Activated CD8-positive, alpha-beta T cell treated with anti-CD3 and anti-CD28 coated beads for 36 hours (primary cell): ENCODE measurements at regions of chr17 and their contacts with region 1.

Region 1: DNA sequence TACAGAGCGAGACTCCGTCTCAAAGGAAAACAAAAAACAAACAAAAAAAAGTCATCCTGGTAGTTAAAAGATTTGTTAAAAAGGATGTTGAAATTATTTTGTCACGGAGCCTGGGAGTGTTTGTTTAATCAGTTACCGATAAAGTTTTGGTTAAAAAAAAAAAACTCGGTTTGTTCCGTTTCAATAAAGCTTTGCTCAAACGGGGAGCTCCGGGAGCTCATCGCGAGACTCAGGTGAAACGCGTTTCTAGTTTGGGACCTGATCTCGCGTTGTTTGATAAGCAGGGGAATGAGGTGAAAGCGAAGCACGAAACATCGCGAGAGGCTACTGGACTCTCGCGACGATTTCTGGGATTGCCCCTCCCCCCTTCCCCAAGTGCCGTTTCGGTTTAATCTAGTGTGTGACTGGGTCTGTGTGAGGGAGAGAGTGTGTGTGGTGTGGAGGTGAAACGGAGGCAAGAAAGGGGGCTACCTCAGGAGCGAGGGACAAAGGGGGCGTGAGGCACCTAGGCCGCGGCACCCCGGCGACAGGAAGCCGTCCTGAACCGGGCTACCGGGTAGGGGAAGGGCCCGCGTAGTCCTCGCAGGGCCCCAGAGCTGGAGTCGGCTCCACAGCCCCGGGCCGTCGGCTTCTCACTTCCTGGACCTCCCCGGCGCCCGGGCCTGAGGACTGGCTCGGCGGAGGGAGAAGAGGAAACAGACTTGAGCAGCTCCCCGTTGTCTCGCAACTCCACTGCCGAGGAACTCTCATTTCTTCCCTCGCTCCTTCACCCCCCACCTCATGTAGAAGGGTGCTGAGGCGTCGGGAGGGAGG is at the start of gene CDK12:
- DNase-seq: peak; percentile 97
- ATAC-seq: peak; percentile 94
- H3K4me3 Mint-ChIP-seq: peak within 1 kb of the TSS; percentile 84
- H3K27ac Mint-ChIP-seq: peak within 1 kb of the TSS; percentile 93
- H3K4me1 Mint-ChIP-seq: peaks cover 21% of the 10 kb centered on the region
- H3K27me3 Mint-ChIP-seq: no peaks in the 10 kb centered on the region
- CTCF ChIP-seq: no peak
- total RNA-seq, gene CDK12: 61.4 to 61.9 TPM

Region 2: GRCh38 chr17:39401412-39402243 is 59.7 kb before region 1 on chr17 and contains the start of gene FBXL20:
- CTCF ChIA-PET with region 1: no interaction called
- POLR2A ChIA-PET with region 1: interaction called, 25 read pairs
- intact Hi-C with region 1: no loop called
- DNase-seq: peak; percentile 94
- ATAC-seq: peak; percentile 71
- H3K4me3 Mint-ChIP-seq: peak within 1 kb of the TSS; percentile 99
- H3K27ac Mint-ChIP-seq: peak within 1 kb of the TSS; percentile 98
- H3K4me1 Mint-ChIP-seq: peaks cover 57% of the 10 kb centered on the region
- H3K27me3 Mint-ChIP-seq: no peaks in the 10 kb centered on the region
- CTCF ChIP-seq: no peak
- total RNA-seq, gene FBXL20: 17.7 to 19.1 TPM

Region 3: GRCh38 chr17:39429600-39429999 is 31.7 kb before region 1 on chr17:
- CTCF ChIA-PET with region 1: no interaction called
- POLR2A ChIA-PET with region 1: interaction called, 11 read pairs
- intact Hi-C with region 1: no loop called
- DNase-seq: no peak
- ATAC-seq: no peak
- H3K4me3 Mint-ChIP-seq: no peak overlapping the region
- H3K27ac Mint-ChIP-seq: no peak overlapping the region
- H3K4me1 Mint-ChIP-seq: no peaks in the 10 kb centered on the region
- H3K27me3 Mint-ChIP-seq: no peaks in the 10 kb centered on the region
- CTCF ChIP-seq: no peak

Region 4: GRCh38 chr17:39443326-39443725 is 18.0 kb before region 1 on chr17:
- CTCF ChIA-PET with region 1: interaction called, 4 read pairs
- POLR2A ChIA-PET with region 1: interaction called, 14 read pairs
- intact Hi-C with region 1: no loop called
- DNase-seq: no peak
- ATAC-seq: no peak
- H3K4me3 Mint-ChIP-seq: no peak overlapping the region
- H3K27ac Mint-ChIP-seq: no peak overlapping the region
- H3K4me1 Mint-ChIP-seq: peaks cover 13% of the 10 kb centered on the region
- H3K27me3 Mint-ChIP-seq: no peaks in the 10 kb centered on the region
- CTCF ChIP-seq: no peak

Region 5: GRCh38 chr17:39450847-39451581 is 10.3 kb before region 1 on chr17 and contains the start of gene MED1:
- CTCF ChIA-PET with region 1: interaction called, 12 read pairs
- POLR2A ChIA-PET with region 1: interaction called, 96 read pairs
- intact Hi-C with region 1: no loop called
- DNase-seq: peak; percentile 97
- ATAC-seq: peak; percentile 98
- H3K4me3 Mint-ChIP-seq: peak within 1 kb of the TSS; percentile 92
- H3K27ac Mint-ChIP-seq: peak within 1 kb of the TSS; percentile 96
- H3K4me1 Mint-ChIP-seq: peaks cover 25% of the 10 kb centered on the region
- H3K27me3 Mint-ChIP-seq: no peaks in the 10 kb centered on the region
- CTCF ChIP-seq: no peak
- total RNA-seq, gene MED1: 60.7 to 64.7 TPM

Region 6: GRCh38 chr17:39484178-39484577 is 22.9 kb after region 1 on chr17:
- CTCF ChIA-PET with region 1: no interaction called
- POLR2A ChIA-PET with region 1: interaction called, 11 read pairs
- intact Hi-C with region 1: no loop called
- DNase-seq: no peak
- ATAC-seq: no peak
- H3K4me3 Mint-ChIP-seq: no peak overlapping the region
- H3K27ac Mint-ChIP-seq: no peak overlapping the region
- H3K4me1 Mint-ChIP-seq: peaks cover 6% of the 10 kb centered on the region
- H3K27me3 Mint-ChIP-seq: no peaks in the 10 kb centered on the region
- CTCF ChIP-seq: no peak